Endothelial cell of umbilical vein (primary cell): ENCODE measurements at regions of chr3 and their contacts with region 1.

Region 1: DNA sequence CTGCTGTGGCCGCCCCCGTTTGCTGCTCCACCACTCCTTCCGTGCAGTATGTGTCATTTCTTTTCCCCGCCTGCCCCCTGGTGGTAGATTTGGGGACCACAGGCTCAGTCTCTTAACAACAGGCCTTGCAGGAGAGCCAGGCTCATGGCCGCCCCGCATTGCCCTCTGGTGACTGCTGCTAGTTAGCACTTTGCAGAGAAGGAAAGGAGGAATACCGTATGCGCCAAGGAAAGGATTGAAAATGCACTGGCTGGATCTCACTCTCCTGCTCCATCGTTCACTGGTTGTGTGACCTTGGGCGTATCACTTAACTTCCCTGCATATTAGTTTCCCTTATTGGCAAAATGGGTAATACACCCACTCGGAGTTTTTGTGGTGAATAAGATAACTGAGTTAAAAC is 39.3 kb upstream of the PXYLP1 start:
- DNase-seq: peak; percentile 93
- H3K4me3 ChIP-seq: no peak overlapping the region
- H3K27ac ChIP-seq: no peak overlapping the region
- H3K4me1 ChIP-seq: no peaks in the 10 kb centered on the region
- H3K27me3 ChIP-seq: peaks cover 5 to 8% of the 10 kb centered on the region in 2 experiments
- CTCF ChIP-seq: peak; percentile 94 to 97
- POLR2A ChIP-seq: no peak

Region 2: DNA sequence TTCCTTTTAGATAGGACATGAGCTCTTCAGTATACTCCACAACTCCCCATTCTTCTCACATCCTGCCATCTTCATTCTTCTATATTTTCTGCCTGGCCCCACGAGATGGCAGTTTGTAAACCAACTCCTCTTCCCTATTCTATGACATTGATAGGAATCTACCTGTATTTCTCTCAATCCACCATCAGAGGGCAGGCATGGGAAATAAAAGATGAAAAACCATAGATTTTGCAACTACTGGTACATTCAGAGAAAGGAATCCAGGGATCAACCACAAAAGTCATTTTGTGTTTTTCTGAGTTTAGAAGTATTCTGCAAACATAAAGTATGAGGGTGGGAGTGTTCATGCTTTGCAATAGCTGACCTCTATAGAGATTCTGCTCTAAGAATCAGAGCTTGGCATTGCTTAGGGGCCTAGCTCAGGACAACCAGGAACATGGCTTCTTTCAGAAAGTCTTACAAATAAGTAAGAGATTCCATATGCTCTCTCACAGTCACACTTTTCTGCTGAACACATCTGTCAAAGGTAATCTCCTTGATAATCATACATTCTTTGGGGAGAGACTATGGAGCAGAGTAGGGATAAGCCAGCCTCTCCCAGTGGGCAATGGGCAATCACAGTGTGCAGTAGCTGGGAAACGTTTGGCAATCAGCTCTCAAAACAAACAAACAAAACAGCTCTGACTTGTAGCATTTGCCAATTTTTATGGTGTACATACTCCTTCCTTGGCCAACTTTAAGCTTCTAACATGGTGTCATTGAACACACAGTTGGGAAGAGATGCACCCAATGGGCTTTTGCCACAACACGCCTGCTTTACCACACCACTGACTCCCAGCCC is 293.8 kb before region 1 on chr3:
- CTCF ChIA-PET with region 1: interaction called, 9 read pairs
- POLR2A ChIA-PET with region 1: no interaction called
- dilution Hi-C with region 1: no loop called
- intact Hi-C with region 1: loop called (anchors 1 kb)
- DNase-seq: peak; percentile 55
- H3K4me3 ChIP-seq: no peak overlapping the region
- H3K27ac ChIP-seq: no peak overlapping the region
- H3K4me1 ChIP-seq: no peaks in the 10 kb centered on the region
- H3K27me3 ChIP-seq: no peaks in the 10 kb centered on the region
- CTCF ChIP-seq: peak; percentile 16 to 42
- POLR2A ChIP-seq: no peak

Region 3: GRCh38 chr3:141000027-141000663 is 192.2 kb before region 1 on chr3:
- CTCF ChIA-PET with region 1: interaction called, 29 read pairs
- POLR2A ChIA-PET with region 1: no interaction called
- dilution Hi-C with region 1: no loop called
- intact Hi-C with region 1: loop called (anchors 1 kb)
- DNase-seq: peak; percentile 51
- H3K4me3 ChIP-seq: no peak overlapping the region
- H3K27ac ChIP-seq: no peak overlapping the region
- H3K4me1 ChIP-seq: no peaks in the 10 kb centered on the region
- H3K27me3 ChIP-seq: peaks cover 0 to 3% of the 10 kb centered on the region in 2 experiments
- CTCF ChIP-seq: peak; percentile 47 to 68
- POLR2A ChIP-seq: no peak

Region 4: GRCh38 chr3:141011232-141011996 is 180.9 kb before region 1 on chr3:
- CTCF ChIA-PET with region 1: interaction called, 26 read pairs
- POLR2A ChIA-PET with region 1: no interaction called
- dilution Hi-C with region 1: no loop called
- intact Hi-C with region 1: loop called (anchors 1 kb)
- DNase-seq: peak; percentile 59
- H3K4me3 ChIP-seq: no peak overlapping the region
- H3K27ac ChIP-seq: no peak overlapping the region
- H3K4me1 ChIP-seq: no peaks in the 10 kb centered on the region
- H3K27me3 ChIP-seq: peaks cover 4 to 9% of the 10 kb centered on the region in 2 experiments
- CTCF ChIP-seq: peak; percentile 70 to 88
- POLR2A ChIP-seq: no peak

Region 5: DNA sequence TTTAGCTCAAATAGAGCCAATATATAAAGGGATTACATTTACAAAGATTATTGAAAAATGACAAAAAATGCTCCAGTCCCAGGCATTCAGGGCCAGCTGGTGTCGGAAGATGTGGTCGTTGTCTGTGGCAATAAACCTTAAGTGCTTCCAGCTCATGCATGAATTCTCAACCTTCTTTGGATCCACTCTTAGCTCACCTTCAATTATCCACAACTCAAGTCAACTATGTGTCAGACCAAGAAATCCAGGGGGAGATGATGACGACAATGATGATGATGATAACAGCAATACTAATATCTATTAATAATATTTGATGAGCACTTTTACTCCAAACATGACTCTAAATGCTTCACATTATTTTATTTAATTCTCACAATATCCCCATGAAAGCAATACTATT is 14.3 kb before region 1 on chr3:
- CTCF ChIA-PET with region 1: interaction called, 13 read pairs
- POLR2A ChIA-PET with region 1: no interaction called
- dilution Hi-C with region 1: no loop called
- intact Hi-C with region 1: no loop called
- DNase-seq: no peak
- H3K4me3 ChIP-seq: no peak overlapping the region
- H3K27ac ChIP-seq: no peak overlapping the region
- H3K4me1 ChIP-seq: no peaks in the 10 kb centered on the region
- H3K27me3 ChIP-seq: peaks cover 0 to 4% of the 10 kb centered on the region in 2 experiments
- CTCF ChIP-seq: no peak
- POLR2A ChIP-seq: no peak